Stomach (tissue), 19 donors: ENCODE measurements at regions of chr11 and their contacts with region 1.

Region 1: GRCh38 chr11:128831174-128832120 is 35.6 kb downstream of the KCNJ1 start:
- DNase-seq: peak; percentile 82 to 93
- H3K4me3 ChIP-seq: peak overlapping the region in 2 of 4 donors; percentile 11 to 31
- H3K27ac ChIP-seq: peak overlapping the region in 3 of 5 donors; percentile 26 to 50 (median 27)
- H3K4me1 ChIP-seq: peaks cover 0 to 21% (median 9%) of the 10 kb centered on the region in 4 donors
- H3K27me3 ChIP-seq: peaks cover 0 to 4% (median 0%) of the 10 kb centered on the region in 3 donors
- CTCF ChIP-seq: peak in 5 of 7 experiments; percentile 46 to 97 (median 84)
- EP300 ChIP-seq: no peak
- POLR2A ChIP-seq: no peak

Region 2: GRCh38 chr11:128172046-128172878 is 659.2 kb before region 1 on chr11:
- intact Hi-C with region 1: loop called (anchors 5 kb)
- DNase-seq: peak; percentile 85 to 94
- H3K4me3 ChIP-seq: no peak overlapping the region
- H3K27ac ChIP-seq: peak overlapping the region in 1 of 5 donors; percentile 14
- H3K4me1 ChIP-seq: no peaks in the 10 kb centered on the region
- H3K27me3 ChIP-seq: no peaks in the 10 kb centered on the region
- CTCF ChIP-seq: peak in 5 of 7 experiments; percentile 48 to 80 (median 73)
- EP300 ChIP-seq: no peak
- POLR2A ChIP-seq: no peak